Heart right ventricle (tissue), 16 donors: ENCODE measurements at regions of chr20 and their contacts with region 1.

Region 1: GRCh38 chr20:22684072-22684762 is 99.8 kb upstream of the FOXA2 start:
- DNase-seq: peak; percentile 48 to 69
- ATAC-seq: peak; percentile 71 to 87 (median 81)
- H3K4me3 ChIP-seq: no peak overlapping the region
- H3K27ac ChIP-seq: no peak overlapping the region
- H3K4me1 ChIP-seq: peaks cover 0 to 22% (median 11%) of the 10 kb centered on the region in 9 donors
- H3K27me3 ChIP-seq: peaks cover 0 to 17% (median 3%) of the 10 kb centered on the region in 7 donors
- CTCF ChIP-seq: peak; percentile 83 to 90 (median 87)

Region 2: DNA sequence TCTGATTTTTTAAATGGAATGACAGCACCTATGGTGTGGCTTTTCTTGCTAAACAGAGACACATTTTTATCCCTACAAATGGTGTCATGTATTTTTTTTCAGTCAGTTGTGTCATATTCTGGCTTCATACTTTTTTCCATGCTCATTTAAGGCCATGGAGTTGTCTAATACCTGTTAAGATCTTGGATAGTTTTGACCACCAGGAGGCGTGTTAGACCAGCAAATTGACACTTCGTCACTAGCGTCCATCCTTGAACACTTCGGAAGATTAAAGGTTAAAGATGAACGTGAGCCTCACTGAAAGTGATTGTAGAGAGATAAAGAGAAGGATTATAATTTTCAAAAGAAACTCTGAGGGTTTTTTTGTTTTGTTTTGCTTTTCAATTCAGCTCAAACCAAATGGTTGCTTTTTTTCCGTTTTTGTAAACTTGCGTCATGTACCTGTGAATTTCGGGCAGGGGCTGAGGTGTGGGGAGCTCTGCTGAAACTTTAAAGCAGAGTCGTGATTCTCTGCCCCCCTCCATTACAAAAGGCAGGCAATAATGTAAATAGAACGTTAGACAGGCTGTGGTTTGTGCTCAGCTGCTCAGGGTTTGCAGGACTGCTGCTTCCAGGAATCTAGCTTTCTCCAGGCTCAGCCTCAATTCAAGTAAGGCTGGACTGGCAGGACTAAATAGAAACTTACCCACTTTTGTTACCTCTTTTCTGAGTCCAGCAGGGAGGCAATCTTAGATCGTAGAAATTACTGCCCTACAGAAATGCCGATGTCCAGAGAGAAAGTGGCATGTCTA is 344.9 kb before region 1 on chr20:
- intact Hi-C with region 1: loop called (anchors 1 to 2 kb)
- DNase-seq: peak in 1 of 2 donors; percentile 44
- ATAC-seq: peak in 6 of 8 donors; percentile 23 to 62 (median 50)
- H3K4me3 ChIP-seq: no peak overlapping the region
- H3K27ac ChIP-seq: no peak overlapping the region
- H3K4me1 ChIP-seq: peaks cover 0 to 6% (median 0%) of the 10 kb centered on the region in 9 donors
- H3K27me3 ChIP-seq: peaks cover 0 to 63% (median 25%) of the 10 kb centered on the region in 7 donors
- CTCF ChIP-seq: peak; percentile 19 to 82 (median 76)

Region 3: GRCh38 chr20:22453239-22454080 is 230.8 kb before region 1 on chr20:
- intact Hi-C with region 1: loop called in 2 of 10 experiments (anchors 5 kb)
- DNase-seq: no peak
- ATAC-seq: no peak
- H3K4me3 ChIP-seq: no peak overlapping the region
- H3K27ac ChIP-seq: no peak overlapping the region
- H3K4me1 ChIP-seq: no peaks in the 10 kb centered on the region
- H3K27me3 ChIP-seq: peaks cover 0 to 90% (median 43%) of the 10 kb centered on the region in 7 donors
- CTCF ChIP-seq: peak in 8 of 9 donors; percentile 20 to 69 (median 56)